PC-9 (cell line): ENCODE measurements at regions of chr15 and their contacts with region 1.

Region 1: DNA sequence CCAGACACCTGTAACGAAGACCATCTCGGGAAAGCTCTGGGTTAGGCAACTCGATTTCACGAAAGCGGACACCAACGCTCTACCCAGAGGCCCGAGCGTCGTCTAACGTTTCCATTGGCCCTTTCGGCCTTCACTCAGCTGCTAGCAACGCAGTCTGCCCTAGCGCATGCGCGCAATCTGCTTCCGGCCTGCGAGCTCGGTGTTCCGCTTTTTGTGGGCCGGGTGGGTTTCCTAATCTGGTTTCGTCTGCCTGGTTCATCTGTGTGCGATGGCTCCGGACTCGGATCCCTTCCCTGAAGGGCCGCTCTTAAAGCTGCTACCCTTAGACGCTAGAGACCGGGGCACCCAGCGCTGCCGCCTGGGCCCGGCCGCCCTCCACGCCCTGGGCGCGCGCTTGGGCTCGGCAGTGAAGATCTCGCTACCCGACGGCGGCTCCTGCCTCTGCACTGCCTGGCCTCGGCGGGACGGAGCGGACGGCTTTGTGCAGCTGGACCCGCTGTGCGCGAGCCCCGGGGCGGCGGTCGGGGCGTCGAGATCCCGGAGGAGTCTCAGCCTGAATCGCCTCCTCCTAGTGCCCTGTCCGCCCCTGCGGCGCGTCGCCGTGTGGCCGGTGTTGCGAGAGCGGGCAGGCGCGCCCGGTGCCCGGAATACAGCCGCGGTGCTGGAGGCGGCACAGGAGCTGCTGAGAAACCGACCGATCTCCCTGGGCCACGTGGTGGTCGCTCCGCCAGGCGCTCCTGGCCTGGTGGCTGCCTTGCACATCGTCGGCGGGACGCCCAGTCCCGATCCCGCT is 24.0 kb upstream of the GATM start:
- DNase-seq: peak; percentile 89 to 91
- H3K4me3 ChIP-seq: peak overlapping the region; percentile 78
- H3K27ac ChIP-seq: peak overlapping the region; percentile 57
- H3K4me1 ChIP-seq: peaks cover 12% of the 10 kb centered on the region
- H3K27me3 ChIP-seq: no peaks in the 10 kb centered on the region
- CTCF ChIP-seq: no peak

Region 2: GRCh38 chr15:45126535-45127158 is 275.7 kb before region 1 on chr15:
- CTCF ChIA-PET with region 1: interaction called, 4 read pairs
- POLR2A ChIA-PET with region 1: no interaction called
- intact Hi-C with region 1: loop called (anchors 2 kb)
- DNase-seq: peak in 1 of 2 experiments; percentile 45
- H3K4me3 ChIP-seq: no peak overlapping the region
- H3K27ac ChIP-seq: no peak overlapping the region
- H3K4me1 ChIP-seq: peaks cover 11% of the 10 kb centered on the region; the same call in 1 of the 2 replicates
- H3K27me3 ChIP-seq: no peaks in the 10 kb centered on the region
- CTCF ChIP-seq: peak; percentile 78

Region 3: GRCh38 chr15:45187894-45188830 is 214.2 kb before region 1 on chr15 and contains the start of gene SHF:
- CTCF ChIA-PET with region 1: no interaction called
- POLR2A ChIA-PET with region 1: interaction called, 11 read pairs
- intact Hi-C with region 1: no loop called
- DNase-seq: no peak
- H3K4me3 ChIP-seq: peak within 1 kb of the TSS; percentile 39; the same call in 1 of the 2 replicates
- H3K27ac ChIP-seq: no peak within 1 kb of the TSS
- H3K4me1 ChIP-seq: 0 out of 2 replicates have a peak, but pooled peaks cover under 1% of the 10 kb centered on the region
- H3K27me3 ChIP-seq: no peaks in the 10 kb centered on the region
- CTCF ChIP-seq: no peak
- total RNA-seq, gene SHF: 6.1 and 6.3 TPM in 2 replicates

Region 4: GRCh38 chr15:45205192-45205591 is 197.2 kb before region 1 on chr15:
- CTCF ChIA-PET with region 1: interaction called, 3 read pairs
- POLR2A ChIA-PET with region 1: no interaction called
- intact Hi-C with region 1: loop called (anchors 1 kb)
- DNase-seq: peak in 1 of 2 experiments; percentile 60
- H3K4me3 ChIP-seq: no peak overlapping the region
- H3K27ac ChIP-seq: no peak overlapping the region
- H3K4me1 ChIP-seq: no peaks in the 10 kb centered on the region
- H3K27me3 ChIP-seq: no peaks in the 10 kb centered on the region
- CTCF ChIP-seq: peak; percentile 76

Region 5: DNA sequence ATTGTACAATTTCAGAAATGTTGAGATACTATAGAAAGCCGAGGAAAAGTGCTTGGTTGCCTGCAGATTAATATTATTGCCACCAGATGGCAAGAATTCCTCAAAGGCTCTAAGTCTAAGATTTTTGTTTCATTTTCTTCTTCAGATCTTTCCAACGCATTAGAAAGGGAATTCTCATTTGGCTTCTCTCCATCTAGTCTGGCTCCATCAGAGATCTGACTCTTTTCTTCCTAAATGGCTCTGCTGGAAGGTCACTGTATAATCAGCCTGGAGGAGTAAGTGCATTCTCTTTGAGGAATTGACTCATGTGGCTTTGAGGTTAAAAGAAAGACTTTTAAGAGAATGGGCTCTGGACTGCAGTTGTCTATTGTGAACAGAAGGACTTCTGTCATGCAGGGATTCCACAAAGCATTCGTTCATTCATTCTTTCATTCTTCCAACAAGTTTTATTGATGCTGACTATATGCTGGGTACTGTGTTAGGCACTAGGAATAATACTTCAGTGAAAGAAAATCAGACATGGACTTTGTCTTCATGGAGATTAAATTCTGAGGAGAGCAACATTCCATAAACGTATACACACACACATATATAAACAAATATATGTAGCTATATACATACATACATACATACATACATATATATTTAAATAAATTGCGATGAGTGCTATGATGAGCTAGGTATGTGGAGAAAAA is 95.0 kb before region 1 on chr15:
- CTCF ChIA-PET with region 1: interaction called, 3 read pairs
- POLR2A ChIA-PET with region 1: no interaction called
- intact Hi-C with region 1: loop called (anchors 1 kb)
- DNase-seq: peak; percentile 3 to 40
- H3K4me3 ChIP-seq: no peak overlapping the region; the same call in 1 of the 2 replicates
- H3K27ac ChIP-seq: no peak overlapping the region
- H3K4me1 ChIP-seq: no peaks in the 10 kb centered on the region
- H3K27me3 ChIP-seq: no peaks in the 10 kb centered on the region
- CTCF ChIP-seq: peak; percentile 59

Region 6: GRCh38 chr15:45355860-45356259 is 46.5 kb before region 1 on chr15:
- CTCF ChIA-PET with region 1: no interaction called
- POLR2A ChIA-PET with region 1: no interaction called
- intact Hi-C with region 1: no loop called
- DNase-seq: no peak
- H3K4me3 ChIP-seq: no peak overlapping the region
- H3K27ac ChIP-seq: no peak overlapping the region
- H3K4me1 ChIP-seq: no peaks in the 10 kb centered on the region
- H3K27me3 ChIP-seq: no peaks in the 10 kb centered on the region
- CTCF ChIP-seq: no peak

Region 7: GRCh38 chr15:45448066-45448510 is 45.7 kb after region 1 on chr15:
- CTCF ChIA-PET with region 1: no interaction called
- POLR2A ChIA-PET with region 1: no interaction called
- intact Hi-C with region 1: no loop called
- DNase-seq: peak; percentile 39 to 72
- H3K4me3 ChIP-seq: peak overlapping the region; percentile 10; the same call in 1 of the 2 replicates
- H3K27ac ChIP-seq: peak overlapping the region; percentile 92
- H3K4me1 ChIP-seq: peaks cover 61% of the 10 kb centered on the region
- H3K27me3 ChIP-seq: no peaks in the 10 kb centered on the region
- CTCF ChIP-seq: no peak